ENCODE measurements at regions of chr2 and their contacts with region 1.

Region 1: DNA sequence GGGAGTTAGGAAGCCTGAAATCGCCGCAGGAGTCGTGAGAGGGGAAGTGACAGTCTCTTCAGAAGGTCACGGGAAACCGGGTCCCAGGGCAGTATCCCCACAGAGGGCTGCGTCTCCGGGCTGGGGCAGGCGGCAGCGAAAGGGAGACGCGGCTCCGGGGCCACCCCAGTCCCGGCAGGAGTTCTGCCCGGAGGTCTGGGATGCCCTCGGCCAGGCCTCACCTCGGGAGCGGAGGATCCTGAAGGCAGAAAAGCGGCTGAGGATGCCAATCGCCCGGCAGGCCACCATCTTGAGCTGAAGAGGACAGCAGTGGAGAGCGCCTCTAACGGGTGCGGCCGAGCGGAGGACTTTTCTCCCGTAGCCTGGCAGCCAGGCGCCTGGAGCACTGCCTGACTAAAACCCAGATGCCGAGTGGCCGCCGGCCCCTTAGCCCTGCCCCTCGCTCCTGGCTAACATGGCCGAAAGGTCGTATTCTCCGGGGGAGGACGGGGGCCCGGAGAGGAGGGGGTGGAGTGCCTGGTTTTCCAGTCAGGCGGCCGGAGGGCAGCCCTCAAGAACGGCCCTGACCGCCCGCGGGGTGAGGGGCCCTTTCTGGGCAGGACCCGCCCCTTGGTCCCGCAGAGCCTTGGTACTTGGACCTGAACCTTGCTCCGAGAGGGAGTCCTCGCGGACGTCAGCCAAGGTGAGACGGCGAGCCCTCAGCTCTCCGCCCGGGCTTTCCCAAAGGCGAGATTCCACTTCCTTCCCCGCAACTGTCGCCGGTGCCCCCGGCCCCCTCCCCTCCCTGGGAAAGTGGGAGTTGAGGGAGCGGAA is at the starts of genes HADHA and HADHB:
- DNase-seq: peak; percentile 91 to 96 (median 93)
- ATAC-seq: peak; percentile 92
- H3K4me3 ChIP-seq: peak within 1 kb of the TSS; percentile 68 to 80
- H3K27ac ChIP-seq: peak within 1 kb of the TSS; percentile 98 to 99
- H3K4me1 ChIP-seq: peaks cover 14 to 80% of the 10 kb centered on the region in 2 donors
- H3K27me3 ChIP-seq: no peaks in the 10 kb centered on the region
- CTCF ChIP-seq: peak in 1 of 2 donors; percentile 34
- polyA plus RNA-seq, gene HADHA: 187 to 241 (median 213) TPM
- polyA plus RNA-seq, gene HADHB: 120 to 150 (median 137) TPM

Region 2: DNA sequence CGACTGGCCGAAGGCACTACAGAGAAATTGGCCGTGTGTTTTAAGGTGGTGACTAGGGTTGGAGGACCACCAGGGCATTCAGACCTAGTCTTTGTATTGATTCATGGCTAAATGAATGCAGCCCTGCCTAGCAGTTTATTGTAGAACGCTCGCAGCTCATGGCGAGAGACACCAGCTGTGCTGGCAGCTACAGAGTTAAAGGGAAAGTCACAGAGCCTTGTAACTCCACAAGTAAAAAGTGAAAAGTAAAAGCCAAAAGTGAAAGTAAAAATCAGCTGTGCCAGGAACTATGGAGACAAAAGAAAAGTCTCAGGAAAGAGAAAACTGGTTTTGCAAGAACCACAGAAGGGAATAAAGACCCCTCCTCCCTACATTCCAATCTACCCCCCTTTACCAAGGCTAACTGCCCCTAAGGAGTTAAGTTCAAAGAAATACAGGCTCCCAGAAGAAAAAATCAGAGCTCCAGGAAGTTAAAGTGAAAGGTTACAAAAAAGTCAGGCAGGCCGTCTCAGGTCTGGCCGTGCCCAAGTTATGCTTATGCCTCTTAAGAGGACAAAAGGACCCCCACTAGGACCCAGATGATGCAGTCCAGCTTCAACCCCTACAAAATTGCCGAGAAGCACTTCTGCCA is 55.1 kb after region 1 on chr2:
- intact Hi-C with region 1: loop called in 1 of 2 experiments (anchors 10 kb)
- DNase-seq: peak in 2 of 4 donors; percentile 68 to 80
- ATAC-seq: peak; percentile 79
- H3K4me3 ChIP-seq: peak overlapping the region; percentile 40 to 55
- H3K27ac ChIP-seq: peak overlapping the region; percentile 82 to 87
- H3K4me1 ChIP-seq: peaks cover 7 to 22% of the 10 kb centered on the region in 2 donors
- H3K27me3 ChIP-seq: no peaks in the 10 kb centered on the region
- CTCF ChIP-seq: no peak

Region 3: DNA sequence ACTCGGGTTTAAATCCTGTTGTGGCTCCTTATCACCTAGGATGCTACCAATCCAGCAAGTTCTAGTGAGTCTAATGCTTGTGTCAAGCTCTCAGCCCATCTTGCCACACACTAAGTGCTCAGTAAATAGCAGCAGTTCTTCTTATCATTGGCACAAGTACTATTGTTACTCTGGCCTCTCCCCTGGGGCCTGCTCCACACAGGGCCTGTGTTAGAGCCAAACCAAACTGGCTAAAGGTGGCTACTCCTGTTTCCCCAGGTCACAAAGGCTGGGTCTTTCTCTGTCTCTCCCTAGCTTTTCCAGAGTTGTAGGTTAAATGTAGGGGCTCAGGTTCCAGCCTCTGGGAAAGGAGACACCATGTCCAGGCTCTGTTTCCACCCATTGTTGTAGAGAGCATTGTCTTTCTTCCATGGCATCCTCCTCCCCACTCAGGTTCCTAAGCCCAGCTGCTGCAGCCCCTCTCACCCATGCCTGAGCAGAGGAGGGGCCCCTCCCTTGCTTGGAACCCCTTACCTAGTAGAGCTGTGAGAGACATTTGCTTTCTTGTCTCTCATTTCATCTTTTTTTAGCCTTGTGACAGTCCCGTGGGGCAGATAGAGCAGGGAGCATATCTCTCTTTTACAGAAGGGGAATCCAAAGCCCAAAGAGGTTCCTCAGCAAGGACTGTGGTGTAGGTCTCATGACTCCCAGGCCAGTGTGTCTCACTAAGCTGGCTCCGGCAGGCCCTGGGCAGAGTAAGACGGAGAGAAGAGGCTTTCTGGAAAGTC is 289.8 kb after region 1 on chr2:
- intact Hi-C with region 1: no loop called
- DNase-seq: peak in 1 of 4 donors; percentile 14
- ATAC-seq: no peak
- H3K4me3 ChIP-seq: no peak overlapping the region
- H3K27ac ChIP-seq: no peak overlapping the region
- H3K4me1 ChIP-seq: no peaks in the 10 kb centered on the region
- H3K27me3 ChIP-seq: no peaks in the 10 kb centered on the region
- CTCF ChIP-seq: no peak

Measured in left lung (tissue), 14 donors.